ENCODE measurements at regions of chr6 and their contacts with region 1.

Region 1: GRCh38 chr6:42460883-42461282 is 9.2 kb upstream of the TRERF1 start:
- DNase-seq: no peak
- H3K4me3 ChIP-seq: no peak overlapping the region
- H3K27ac ChIP-seq: no peak overlapping the region
- H3K4me1 ChIP-seq: no peaks in the 10 kb centered on the region
- H3K27me3 ChIP-seq: no peaks in the 10 kb centered on the region
- CTCF ChIP-seq: no peak
- POLR2A ChIP-seq: no peak

Region 2: DNA sequence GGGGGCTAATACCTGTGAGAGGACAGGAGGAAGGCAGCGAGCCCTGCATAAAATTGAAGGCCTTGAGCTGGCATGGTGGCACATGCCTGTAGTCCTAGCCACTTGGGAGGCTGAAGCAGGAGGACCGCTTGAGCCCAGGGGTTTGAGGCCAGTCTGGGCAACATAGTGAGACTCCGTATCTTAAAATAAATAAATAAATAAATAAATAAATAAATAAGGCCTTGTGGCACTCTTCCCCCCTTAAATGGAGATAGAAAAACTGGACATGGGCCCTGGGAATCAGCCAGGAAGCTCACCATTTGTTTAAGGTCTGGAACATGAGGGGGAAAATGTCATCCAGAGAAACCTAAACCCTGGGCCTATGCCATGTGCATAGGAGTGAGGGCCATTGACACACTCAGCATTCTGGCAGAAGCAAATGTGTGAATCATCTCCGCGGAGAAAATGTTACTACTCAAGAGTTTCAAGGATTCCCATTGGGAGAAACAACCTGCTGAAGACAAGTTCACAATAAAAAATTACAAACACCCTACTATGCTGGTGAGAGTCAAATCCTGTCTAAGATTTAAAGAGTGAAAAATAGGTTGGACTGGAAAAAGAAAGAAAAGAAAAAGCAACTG is 51.0 kb after region 1 on chr6:
- intact Hi-C with region 1: loop called in 1 of 2 experiments (anchors 10 kb)
- DNase-seq: peak in 3 of 7 donors; percentile 16 to 43 (median 18)
- H3K4me3 ChIP-seq: no peak overlapping the region
- H3K27ac ChIP-seq: no peak overlapping the region
- H3K4me1 ChIP-seq: peaks cover 0 to 18% of the 10 kb centered on the region in 2 donors
- H3K27me3 ChIP-seq: no peaks in the 10 kb centered on the region
- CTCF ChIP-seq: no peak
- POLR2A ChIP-seq: no peak

Measured in adrenal gland (tissue), 19 donors.